Activated naive CD4-positive, alpha-beta T cell treated with anti-CD3 and anti-CD28 coated beads for 36 hours (primary cell): ENCODE measurements at regions of chr2 and their contacts with region 1.

Region 1: DNA sequence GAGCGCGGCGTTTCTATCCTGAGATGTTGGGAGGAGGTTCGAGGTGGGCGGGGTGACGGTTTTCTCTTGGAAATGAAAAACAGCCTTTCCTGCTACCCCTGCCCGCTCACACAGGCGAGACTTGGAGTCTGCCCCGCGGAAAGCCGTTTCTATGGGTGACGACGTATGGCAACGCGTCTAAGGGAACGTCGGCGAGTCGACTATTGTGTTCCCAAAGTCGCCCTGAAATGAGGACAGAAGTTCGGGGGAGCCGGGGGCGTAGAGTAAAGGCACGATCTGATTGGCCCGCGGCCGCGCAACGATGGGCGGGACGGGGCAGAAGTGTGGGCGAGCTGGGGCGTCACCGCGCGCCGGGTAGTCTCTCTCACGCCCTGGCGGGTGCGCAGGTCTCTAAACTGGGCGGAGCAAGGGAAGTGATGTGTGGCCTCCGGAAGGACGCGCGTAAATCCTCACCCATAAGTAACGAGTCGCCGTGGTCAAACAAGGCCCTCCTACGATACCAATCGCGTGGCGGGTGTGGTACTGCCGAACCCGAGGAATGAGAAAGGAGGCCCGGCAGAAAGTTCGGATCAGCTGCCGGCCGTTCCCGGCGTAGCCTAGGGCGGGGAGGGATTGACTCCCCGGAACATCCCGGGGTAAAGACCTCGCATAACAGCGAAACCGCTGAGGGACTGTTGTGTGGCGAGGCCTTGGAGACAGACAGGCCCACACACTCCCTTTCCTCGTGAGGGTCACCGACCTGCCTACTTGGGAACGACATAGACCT is 89.6 kb downstream of the FAM161A start:
- DNase-seq: peak; percentile 98
- H3K4me3 Mint-ChIP-seq: peak overlapping the region; percentile 91
- H3K27ac Mint-ChIP-seq: peak overlapping the region; percentile 94
- H3K4me1 Mint-ChIP-seq: peaks cover 16% of the 10 kb centered on the region
- H3K27me3 Mint-ChIP-seq: no peaks in the 10 kb centered on the region

Region 2: DNA sequence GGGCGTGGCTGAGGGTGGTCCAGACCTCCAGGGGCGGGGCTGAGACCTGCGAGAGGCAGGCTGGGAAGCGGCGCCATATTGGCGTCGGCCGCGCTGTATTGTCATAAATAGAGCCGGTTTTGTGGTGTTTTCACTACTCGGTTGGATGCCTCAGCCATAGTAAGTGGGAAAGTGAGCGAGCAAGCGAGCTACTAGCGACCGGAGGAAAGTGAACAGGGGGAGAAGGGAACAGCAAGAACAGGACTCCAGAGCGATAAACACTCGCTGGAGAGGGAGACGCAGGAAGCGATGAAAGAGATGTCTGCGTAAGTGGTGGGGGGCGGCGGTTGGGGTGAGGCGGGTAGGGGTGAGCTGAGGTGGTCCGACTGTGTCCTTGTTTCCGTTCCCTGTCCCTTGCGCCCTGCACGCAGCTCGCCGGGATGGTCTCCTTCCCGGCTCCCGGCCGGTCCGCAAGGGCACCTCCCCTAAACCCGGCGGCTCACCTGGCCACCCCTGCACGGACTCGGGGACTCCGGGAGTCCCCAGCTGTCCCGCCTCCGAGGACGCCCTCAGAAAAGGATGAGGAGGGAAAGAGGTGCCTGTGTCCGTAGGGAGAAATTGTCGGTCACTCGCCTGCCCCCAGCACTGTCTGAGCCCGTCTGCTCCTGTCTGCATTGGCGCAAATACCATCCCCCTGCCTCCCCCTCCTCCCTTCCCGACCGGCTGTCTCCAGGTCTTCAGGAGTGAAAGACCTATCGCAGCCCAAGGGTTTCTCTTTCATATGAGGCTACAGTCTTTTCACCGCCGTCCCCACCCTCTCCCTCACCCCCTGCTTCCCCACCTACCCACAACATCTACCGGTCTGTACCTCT is 1007.8 kb before region 1 on chr2 and contains the start of gene PAPOLG:
- CTCF ChIA-PET with region 1: no interaction called
- intact Hi-C with region 1: loop called (anchors 1 kb)
- DNase-seq: peak; percentile 99
- H3K4me3 Mint-ChIP-seq: peak within 1 kb of the TSS; percentile 99
- H3K27ac Mint-ChIP-seq: peak within 1 kb of the TSS; percentile 97
- H3K4me1 Mint-ChIP-seq: peaks cover 40% of the 10 kb centered on the region
- H3K27me3 Mint-ChIP-seq: no peaks in the 10 kb centered on the region
- total RNA-seq, gene PAPOLG: 14.1 to 16.1 TPM

Region 3: GRCh38 chr2:61016808-61017555 is 747.2 kb before region 1 on chr2:
- CTCF ChIA-PET with region 1: no interaction called
- intact Hi-C with region 1: loop called (anchors 1 kb)
- DNase-seq: peak; percentile 82
- H3K4me3 Mint-ChIP-seq: peak overlapping the region; percentile 98
- H3K27ac Mint-ChIP-seq: peak overlapping the region; percentile 95
- H3K4me1 Mint-ChIP-seq: peaks cover 43% of the 10 kb centered on the region
- H3K27me3 Mint-ChIP-seq: no peaks in the 10 kb centered on the region

Region 4: DNA sequence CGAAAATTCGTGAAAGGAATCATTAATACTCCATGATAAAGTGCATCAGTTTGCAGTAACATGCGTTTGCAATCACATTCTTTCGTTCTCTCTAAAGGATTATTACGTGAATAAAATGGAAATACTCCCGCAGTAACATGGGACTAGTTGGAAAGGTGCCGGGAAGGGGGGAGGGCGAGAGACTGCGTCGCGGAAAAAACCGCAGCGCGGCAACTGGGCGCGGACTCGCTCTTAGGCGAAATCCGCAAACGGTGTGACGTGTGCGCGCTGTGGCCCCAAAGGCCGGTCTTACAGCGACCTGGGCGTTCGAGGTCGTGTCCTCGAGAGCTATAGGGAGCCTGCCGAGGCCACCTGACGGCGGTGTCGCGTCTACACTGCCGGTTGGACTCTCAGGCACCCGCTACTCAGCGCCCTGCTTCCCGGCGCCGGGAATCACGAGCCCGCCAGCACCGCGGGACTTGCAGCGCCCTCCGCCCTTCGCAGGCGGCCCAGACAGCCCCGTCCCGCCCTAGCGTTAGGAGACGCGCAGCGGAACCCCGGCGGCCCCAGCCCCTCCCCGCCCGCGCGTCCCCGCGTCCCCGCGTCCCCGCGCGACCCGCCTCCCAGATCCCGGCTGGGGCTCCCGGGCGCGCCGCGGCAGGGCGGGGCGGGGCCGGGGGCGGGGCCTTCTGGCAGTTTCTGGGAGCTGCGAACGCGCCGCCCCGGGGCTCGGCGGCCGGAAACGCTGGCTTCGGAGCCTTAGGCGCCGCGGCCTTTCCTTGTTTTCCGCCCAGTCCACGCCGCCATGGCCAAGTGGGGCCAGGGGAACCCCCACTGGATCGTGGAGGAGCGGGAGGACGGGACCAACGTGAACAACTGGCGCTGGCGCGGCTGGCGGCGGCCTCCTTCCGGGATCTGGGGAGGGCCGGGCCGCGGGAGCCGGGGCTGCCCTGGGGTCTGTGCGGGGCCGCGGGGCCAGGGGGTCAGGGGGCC is 587.2 kb before region 1 on chr2:
- CTCF ChIA-PET with region 1: no interaction called
- intact Hi-C with region 1: loop called (anchors 1 kb)
- DNase-seq: peak; percentile 94
- H3K4me3 Mint-ChIP-seq: peak overlapping the region; percentile 78
- H3K27ac Mint-ChIP-seq: peak overlapping the region; percentile 79
- H3K4me1 Mint-ChIP-seq: peaks cover 48% of the 10 kb centered on the region
- H3K27me3 Mint-ChIP-seq: no peaks in the 10 kb centered on the region

Region 5: GRCh38 chr2:61736953-61737352 is 27.3 kb before region 1 on chr2:
- CTCF ChIA-PET with region 1: no interaction called
- intact Hi-C with region 1: no loop called
- DNase-seq: no peak
- H3K4me3 Mint-ChIP-seq: no peak overlapping the region
- H3K27ac Mint-ChIP-seq: no peak overlapping the region
- H3K4me1 Mint-ChIP-seq: no peaks in the 10 kb centered on the region
- H3K27me3 Mint-ChIP-seq: no peaks in the 10 kb centered on the region

Region 6: GRCh38 chr2:61854474-61855182 is 90.4 kb after region 1 on chr2:
- CTCF ChIA-PET with region 1: no interaction called
- intact Hi-C with region 1: loop called (anchors 1 kb)
- DNase-seq: peak; percentile 95
- H3K4me3 Mint-ChIP-seq: peak overlapping the region; percentile 93
- H3K27ac Mint-ChIP-seq: peak overlapping the region; percentile 91
- H3K4me1 Mint-ChIP-seq: peaks cover 17% of the 10 kb centered on the region
- H3K27me3 Mint-ChIP-seq: no peaks in the 10 kb centered on the region

Region 7: DNA sequence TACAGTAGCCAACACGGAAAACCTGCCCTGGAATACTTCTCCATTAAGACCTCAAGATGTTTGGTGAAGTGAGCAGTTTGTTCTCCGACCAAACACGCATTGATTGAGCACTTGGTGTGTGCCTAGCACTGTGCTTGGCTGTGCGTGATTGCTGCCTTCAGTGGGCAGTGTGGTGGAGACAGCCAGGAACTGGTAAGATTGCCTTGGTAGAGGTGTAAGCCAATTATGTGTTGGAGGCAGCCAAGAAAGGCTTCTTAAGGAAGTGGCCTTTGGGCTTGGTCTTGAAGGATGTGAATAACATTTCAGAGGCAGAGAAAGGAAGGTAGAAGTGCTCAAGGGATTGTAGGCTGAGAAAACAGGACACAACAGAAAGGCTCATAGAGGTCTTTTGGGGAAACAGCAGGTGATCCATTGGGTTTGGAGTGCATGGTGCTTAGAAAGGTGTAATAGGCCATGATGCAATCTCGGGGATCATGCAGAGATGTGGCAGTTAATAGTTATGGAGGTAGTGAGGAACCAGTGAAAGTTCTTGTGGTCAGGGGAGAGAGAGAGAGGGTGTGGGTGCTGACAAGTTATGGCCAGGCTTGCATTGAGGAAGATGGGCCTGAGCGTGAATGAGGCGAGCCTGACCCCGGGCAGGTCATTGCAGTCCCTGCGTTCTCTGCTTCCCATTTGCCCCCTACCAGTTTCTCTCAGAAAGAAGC is 438.0 kb after region 1 on chr2:
- CTCF ChIA-PET with region 1: no interaction called
- intact Hi-C with region 1: loop called (anchors 1 kb)
- DNase-seq: peak; percentile 35
- H3K4me3 Mint-ChIP-seq: peak overlapping the region; percentile 17
- H3K27ac Mint-ChIP-seq: peak overlapping the region; percentile 97
- H3K4me1 Mint-ChIP-seq: peaks cover 79% of the 10 kb centered on the region
- H3K27me3 Mint-ChIP-seq: no peaks in the 10 kb centered on the region

Region 8: GRCh38 chr2:63588385-63589147 is 1824.3 kb after region 1 on chr2 and contains the starts of genes MDH1 and WDPCP:
- CTCF ChIA-PET with region 1: no interaction called
- intact Hi-C with region 1: loop called (anchors 5 kb)
- DNase-seq: peak; percentile 95
- H3K4me3 Mint-ChIP-seq: peak within 1 kb of the TSS; percentile 99
- H3K27ac Mint-ChIP-seq: peak within 1 kb of the TSS; percentile 94
- H3K4me1 Mint-ChIP-seq: peaks cover 31% of the 10 kb centered on the region
- H3K27me3 Mint-ChIP-seq: no peaks in the 10 kb centered on the region
- total RNA-seq, gene MDH1: 269 to 275 TPM
- total RNA-seq, gene WDPCP: 5.6 to 5.7 TPM